Natural killer cell (primary cell): ENCODE measurements at regions of chr3 and their contacts with region 1.

Region 1: DNA sequence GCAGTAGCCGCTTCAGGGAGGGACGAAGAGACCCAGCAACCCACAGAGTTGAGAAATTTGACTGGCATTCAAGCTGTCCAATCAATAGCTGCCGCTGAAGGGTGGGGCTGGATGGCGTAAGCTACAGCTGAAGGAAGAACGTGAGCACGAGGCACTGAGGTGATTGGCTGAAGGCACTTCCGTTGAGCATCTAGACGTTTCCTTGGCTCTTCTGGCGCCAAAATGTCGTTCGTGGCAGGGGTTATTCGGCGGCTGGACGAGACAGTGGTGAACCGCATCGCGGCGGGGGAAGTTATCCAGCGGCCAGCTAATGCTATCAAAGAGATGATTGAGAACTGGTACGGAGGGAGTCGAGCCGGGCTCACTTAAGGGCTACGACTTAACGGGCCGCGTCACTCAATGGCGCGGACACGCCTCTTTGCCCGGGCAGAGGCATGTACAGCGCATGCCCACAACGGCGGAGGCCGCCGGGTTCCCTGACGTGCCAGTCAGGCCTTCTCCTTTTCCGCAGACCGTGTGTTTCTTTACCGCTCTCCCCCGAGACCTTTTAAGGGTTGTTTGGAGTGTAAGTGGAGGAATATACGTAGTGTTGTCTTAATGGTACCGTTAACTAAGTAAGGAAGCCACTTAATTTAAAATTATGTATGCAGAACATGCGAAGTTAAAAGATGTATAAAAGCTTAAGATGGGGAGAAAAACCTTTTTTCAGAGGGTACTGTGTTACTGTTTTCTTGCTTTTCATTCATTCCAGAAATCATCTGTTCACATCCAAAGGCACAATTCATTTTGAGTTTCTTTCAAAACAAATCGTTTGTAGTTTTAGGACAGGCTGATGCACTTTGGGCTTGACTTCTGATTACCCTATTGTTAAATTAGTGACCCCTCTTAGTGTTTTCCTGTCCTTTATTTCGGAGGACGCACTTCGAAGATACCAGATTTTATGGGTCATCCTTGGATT is at the start of gene MLH1:
- DNase-seq: peak; percentile 96 to 97
- ATAC-seq: peak; percentile 83 to 94 (median 84)
- H3K4me3 ChIP-seq: peak within 1 kb of the TSS; percentile 68
- H3K4me3 Mint-ChIP-seq: no peak within 1 kb of the TSS
- H3K27ac ChIP-seq: peak within 1 kb of the TSS; percentile 97
- H3K27ac Mint-ChIP-seq: no peak within 1 kb of the TSS
- H3K4me1 ChIP-seq: peaks cover 17% of the 10 kb centered on the region
- H3K4me1 Mint-ChIP-seq: peaks cover 20 to 25% of the 10 kb centered on the region in 2 donors
- H3K27me3 ChIP-seq: no peaks in the 10 kb centered on the region
- H3K27me3 Mint-ChIP-seq: no peaks in the 10 kb centered on the region
- CTCF ChIP-seq: no peak
- total RNA-seq, gene MLH1: 26.9 to 42.6 (median 27.3) TPM

Region 2: GRCh38 chr3:36911990-36912804 is 81.4 kb before region 1 on chr3:
- intact Hi-C with region 1: loop called (anchors 1 kb)
- DNase-seq: peak in 1 of 2 donors; percentile 76
- ATAC-seq: peak; percentile 73 to 88 (median 76)
- H3K4me3 ChIP-seq: peak overlapping the region; percentile 6
- H3K4me3 Mint-ChIP-seq: peak overlapping the region; percentile 56
- H3K27ac ChIP-seq: peak overlapping the region; percentile 89
- H3K27ac Mint-ChIP-seq: peak overlapping the region; percentile 77 to 83
- H3K4me1 ChIP-seq: peaks cover 30% of the 10 kb centered on the region
- H3K4me1 Mint-ChIP-seq: peaks cover 29 to 37% of the 10 kb centered on the region in 2 donors
- H3K27me3 ChIP-seq: no peaks in the 10 kb centered on the region
- H3K27me3 Mint-ChIP-seq: no peaks in the 10 kb centered on the region
- CTCF ChIP-seq: no peak

Region 3: GRCh38 chr3:36944012-36944640 is 49.5 kb before region 1 on chr3:
- intact Hi-C with region 1: loop called (anchors 2 kb)
- DNase-seq: peak; percentile 44 to 53
- ATAC-seq: peak; percentile 37 to 53 (median 37)
- H3K4me3 ChIP-seq: peak overlapping the region; percentile 82
- H3K4me3 Mint-ChIP-seq: peak overlapping the region; percentile 83
- H3K27ac ChIP-seq: peak overlapping the region; percentile 8
- H3K27ac Mint-ChIP-seq: peak overlapping the region; percentile 41 to 81
- H3K4me1 ChIP-seq: peaks cover 18% of the 10 kb centered on the region
- H3K4me1 Mint-ChIP-seq: peaks cover 6 to 23% of the 10 kb centered on the region in 2 donors
- H3K27me3 ChIP-seq: no peaks in the 10 kb centered on the region
- H3K27me3 Mint-ChIP-seq: no peaks in the 10 kb centered on the region
- CTCF ChIP-seq: no peak

Region 4: DNA sequence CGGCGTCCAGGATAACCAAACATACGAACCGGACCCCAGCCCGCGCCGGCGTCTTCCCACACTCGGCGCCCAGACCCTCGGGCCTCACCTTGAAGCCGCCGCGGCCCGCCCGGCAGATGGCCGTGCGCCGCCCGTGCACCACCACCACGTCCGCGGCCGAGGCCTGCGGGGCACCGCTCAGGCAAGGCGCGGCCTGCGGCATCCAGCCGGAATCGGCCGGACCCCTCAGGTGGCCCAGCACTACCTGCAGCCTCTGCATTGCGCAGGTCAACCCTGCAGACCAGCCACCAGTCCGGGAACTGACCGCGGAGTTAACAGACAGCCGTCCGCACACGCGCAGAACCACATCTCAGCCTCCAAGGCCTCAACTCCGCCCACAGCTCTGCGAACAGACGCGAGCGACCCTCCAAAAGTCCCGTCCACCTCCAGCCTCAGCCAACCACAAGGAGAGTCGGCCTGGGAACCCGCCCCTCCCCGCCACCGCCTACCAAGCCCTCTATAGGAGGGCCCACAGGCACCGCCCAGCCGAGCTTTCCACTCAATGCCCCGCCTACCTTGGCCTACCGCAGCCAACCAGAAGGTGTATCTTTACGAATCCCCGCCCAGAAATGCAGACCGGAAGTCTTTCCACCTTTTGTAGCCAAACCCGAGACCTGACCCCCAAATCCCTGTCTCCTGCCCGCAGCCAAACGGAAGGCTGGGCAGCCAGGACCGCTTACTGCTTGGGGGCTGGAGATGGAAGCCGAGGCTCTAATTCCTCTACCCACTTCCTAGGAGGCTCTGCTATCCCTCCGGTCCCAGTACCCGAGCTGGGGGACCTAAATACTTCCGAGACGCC is 1143.4 kb after region 1 on chr3 and contains the start of gene ACAA1:
- intact Hi-C with region 1: loop called (anchors 2 kb)
- DNase-seq: peak; percentile 94 to 98
- ATAC-seq: peak; percentile 89 to 96 (median 91)
- H3K4me3 ChIP-seq: peak within 1 kb of the TSS; percentile 95
- H3K4me3 Mint-ChIP-seq: peak within 1 kb of the TSS; percentile 99
- H3K27ac ChIP-seq: peak within 1 kb of the TSS; percentile 95
- H3K27ac Mint-ChIP-seq: peak within 1 kb of the TSS; percentile 95
- H3K4me1 ChIP-seq: peaks cover 55% of the 10 kb centered on the region
- H3K4me1 Mint-ChIP-seq: peaks cover 68 to 70% of the 10 kb centered on the region in 2 donors
- H3K27me3 ChIP-seq: no peaks in the 10 kb centered on the region
- H3K27me3 Mint-ChIP-seq: no peaks in the 10 kb centered on the region
- CTCF ChIP-seq: no peak
- total RNA-seq, gene ACAA1: 79.4 to 101 (median 93.9) TPM